Activated CD4-positive, alpha-beta T cell treated with anti-CD3 and anti-CD28 coated beads for 36 hours (primary cell): ENCODE measurements at regions of chr18 and their contacts with region 1.

Region 1: GRCh38 chr18:2655178-2655953 is at the start of gene SMCHD1:
- DNase-seq: peak; percentile 97
- ATAC-seq: peak; percentile 78
- H3K4me3 Mint-ChIP-seq: peak within 1 kb of the TSS; percentile 95
- H3K27ac Mint-ChIP-seq: peak within 1 kb of the TSS; percentile 96
- H3K4me1 Mint-ChIP-seq: peaks cover 31% of the 10 kb centered on the region
- H3K27me3 Mint-ChIP-seq: no peaks in the 10 kb centered on the region
- total RNA-seq, gene SMCHD1: 89.5 to 121 TPM

Region 2: DNA sequence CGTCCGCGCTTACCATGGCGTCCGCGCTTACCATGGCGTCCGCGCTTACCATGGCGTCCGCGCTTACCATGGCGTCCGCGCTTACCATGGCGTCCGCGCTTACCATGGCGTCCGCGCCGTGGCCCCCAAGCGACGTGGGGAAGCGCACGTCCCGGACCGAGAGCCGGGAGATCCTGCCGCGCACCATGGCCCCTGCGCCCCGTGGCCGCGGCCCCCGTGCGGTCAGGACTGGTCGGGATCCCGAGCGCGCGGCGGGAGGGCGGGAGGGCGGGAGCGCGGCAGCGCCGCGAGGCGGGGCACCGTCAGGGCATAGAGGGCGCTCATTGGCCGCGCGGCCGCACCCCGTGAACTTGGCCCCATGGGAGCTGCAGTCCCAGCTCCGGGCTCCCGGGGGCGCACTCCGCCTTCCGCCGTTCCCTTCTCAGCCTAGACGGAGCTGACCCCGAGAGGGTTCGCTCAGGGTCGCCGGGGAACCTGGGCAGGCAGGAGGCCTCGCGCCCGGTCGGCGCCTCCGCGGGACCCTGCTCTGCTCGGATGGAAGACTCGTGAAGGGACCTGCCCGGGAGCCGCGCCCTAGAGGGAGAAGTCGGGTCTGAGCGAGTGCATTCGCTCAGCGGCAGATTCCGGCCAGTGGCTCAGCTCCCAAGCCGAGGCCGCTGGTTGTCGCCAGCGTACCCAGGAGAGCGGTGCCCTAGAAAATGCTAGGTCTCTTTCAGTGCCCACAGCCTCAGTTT is 1942.8 kb before region 1 on chr18 and contains the start of gene ENOSF1:
- CTCF ChIA-PET with region 1: no interaction called
- POLR2A ChIA-PET with region 1: no interaction called
- intact Hi-C with region 1: loop called in 1 of 2 experiments (anchors 2 kb)
- DNase-seq: peak; percentile 95
- ATAC-seq: peak; percentile 91
- H3K4me3 Mint-ChIP-seq: peak within 1 kb of the TSS; percentile 94
- H3K27ac Mint-ChIP-seq: peak within 1 kb of the TSS; percentile 99
- H3K4me1 Mint-ChIP-seq: peaks cover 53% of the 10 kb centered on the region
- H3K27me3 Mint-ChIP-seq: no peaks in the 10 kb centered on the region
- total RNA-seq, gene ENOSF1: 92.6 to 97.4 TPM

Region 3: DNA sequence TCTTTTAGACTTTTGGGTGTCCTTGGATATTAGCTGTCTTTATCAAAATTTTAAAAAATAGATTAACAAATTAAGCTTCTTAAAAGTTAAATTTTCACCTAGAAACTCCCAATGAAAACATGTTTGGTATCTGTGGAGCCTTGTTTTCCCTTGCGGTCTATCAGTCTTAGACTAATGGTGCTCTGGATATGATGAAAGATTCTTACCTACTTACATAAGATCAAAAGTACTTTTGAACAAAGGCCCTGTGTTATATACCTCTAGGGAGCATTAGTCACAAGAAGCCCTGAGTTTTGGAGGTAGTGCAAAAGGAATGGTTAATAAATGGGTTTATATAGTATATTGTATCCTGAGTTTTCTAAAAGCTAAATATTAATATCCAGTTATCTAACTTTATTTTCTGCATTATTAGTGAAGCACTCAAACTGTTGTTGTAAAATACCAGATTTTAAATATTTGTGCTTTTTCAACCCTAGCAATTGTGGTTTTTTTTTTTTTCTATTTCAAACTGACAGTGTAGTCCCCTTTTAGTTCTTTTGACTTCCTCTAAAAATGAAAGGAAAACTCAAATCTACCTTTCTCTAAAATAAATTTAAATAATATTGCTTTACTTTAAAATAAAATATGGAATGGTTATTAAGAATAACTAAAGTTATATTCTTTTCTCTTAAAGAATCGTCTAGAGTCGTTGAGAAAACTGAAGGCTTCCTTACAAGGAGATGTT is 65.9 kb before region 1 on chr18:
- CTCF ChIA-PET with region 1: interaction called, 3 read pairs
- POLR2A ChIA-PET with region 1: interaction called, 4 read pairs
- intact Hi-C with region 1: loop called (anchors 5 kb)
- DNase-seq: no peak
- ATAC-seq: peak; percentile 78
- H3K4me3 Mint-ChIP-seq: peak overlapping the region; percentile 43
- H3K27ac Mint-ChIP-seq: peak overlapping the region; percentile 93
- H3K4me1 Mint-ChIP-seq: peaks cover 44% of the 10 kb centered on the region
- H3K27me3 Mint-ChIP-seq: no peaks in the 10 kb centered on the region

Region 4: GRCh38 chr18:2641638-2642037 is 13.7 kb before region 1 on chr18:
- CTCF ChIA-PET with region 1: interaction called, 5 read pairs
- POLR2A ChIA-PET with region 1: interaction called, 8 read pairs
- intact Hi-C with region 1: loop called (anchors 1 kb)
- DNase-seq: no peak
- ATAC-seq: peak; percentile 71
- H3K4me3 Mint-ChIP-seq: peak overlapping the region; percentile 63
- H3K27ac Mint-ChIP-seq: no peak overlapping the region
- H3K4me1 Mint-ChIP-seq: peaks cover 51% of the 10 kb centered on the region
- H3K27me3 Mint-ChIP-seq: no peaks in the 10 kb centered on the region

Region 5: DNA sequence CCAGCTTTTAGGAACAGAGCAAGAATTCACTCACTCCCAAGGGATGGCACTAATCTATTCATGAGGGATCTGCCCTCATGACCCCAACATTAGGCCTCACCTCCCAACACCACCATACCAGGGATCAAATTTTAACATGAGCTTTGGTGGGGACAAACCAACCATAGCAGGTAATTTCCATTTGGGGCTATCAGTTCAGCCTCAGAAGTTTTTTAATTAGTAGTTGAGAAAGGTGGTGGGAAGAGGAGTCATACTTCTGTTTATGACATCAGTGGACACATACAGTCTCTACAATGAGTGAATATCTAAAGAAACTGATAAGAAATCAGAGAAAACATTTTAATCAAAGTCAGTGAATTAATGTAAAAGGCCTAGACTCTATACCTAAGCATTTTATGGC is 131.9 kb after region 1 on chr18:
- CTCF ChIA-PET with region 1: no interaction called
- POLR2A ChIA-PET with region 1: no interaction called
- intact Hi-C with region 1: no loop called
- DNase-seq: no peak
- ATAC-seq: no peak
- H3K4me3 Mint-ChIP-seq: no peak overlapping the region
- H3K27ac Mint-ChIP-seq: peak overlapping the region; percentile 32
- H3K4me1 Mint-ChIP-seq: peaks cover 5% of the 10 kb centered on the region
- H3K27me3 Mint-ChIP-seq: no peaks in the 10 kb centered on the region

Region 6: DNA sequence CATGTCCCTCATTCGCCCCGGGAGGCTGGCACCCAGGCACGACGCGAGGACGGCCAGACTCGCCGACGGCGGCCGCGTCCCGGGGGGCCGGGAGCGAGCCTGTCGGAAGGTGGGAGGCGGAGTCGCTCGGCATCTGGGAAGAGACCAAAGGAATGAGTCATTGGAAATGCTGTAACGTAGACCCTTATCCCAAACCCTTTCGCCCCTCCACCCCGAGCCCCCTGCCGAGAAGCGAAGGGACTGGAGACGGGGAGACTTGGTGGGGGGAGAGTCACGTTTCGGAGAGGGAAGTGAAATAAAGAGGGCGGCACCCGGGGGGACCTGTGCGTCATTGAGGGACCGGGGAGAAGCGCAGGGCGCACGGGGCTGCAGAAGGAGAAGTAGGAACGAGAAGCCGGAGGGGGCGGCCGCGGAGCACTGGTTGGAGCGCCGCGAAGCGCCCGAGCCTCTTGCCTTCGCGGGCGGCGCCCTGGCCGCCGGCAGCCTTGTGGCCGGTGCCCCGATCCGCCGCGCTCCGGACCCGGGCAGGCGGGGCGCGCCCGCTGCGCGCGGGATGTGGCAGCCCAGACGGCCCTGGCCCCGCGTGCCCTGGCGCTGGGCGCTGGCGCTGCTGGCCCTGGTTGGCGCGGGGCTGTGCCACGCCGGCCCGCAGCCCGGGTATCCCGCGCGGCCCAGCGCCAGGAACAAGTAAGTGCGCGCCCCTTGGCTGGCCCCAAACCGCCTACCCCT is 191.4 kb after region 1 on chr18 and contains the start of gene EMILIN2:
- CTCF ChIA-PET with region 1: no interaction called
- POLR2A ChIA-PET with region 1: no interaction called
- intact Hi-C with region 1: loop called in 1 of 2 experiments (anchors 2 kb)
- DNase-seq: peak; percentile 73
- ATAC-seq: peak; percentile 21
- H3K4me3 Mint-ChIP-seq: peak within 1 kb of the TSS; percentile 76
- H3K27ac Mint-ChIP-seq: peak within 1 kb of the TSS; percentile 64
- H3K4me1 Mint-ChIP-seq: peaks cover 36% of the 10 kb centered on the region
- H3K27me3 Mint-ChIP-seq: peaks cover 34% of the 10 kb centered on the region
- total RNA-seq, gene EMILIN2: 12.0 to 15.7 TPM

Region 7: GRCh38 chr18:3012964-3013804 is 357.8 kb after region 1 on chr18 and contains the start of gene LPIN2:
- CTCF ChIA-PET with region 1: no interaction called
- POLR2A ChIA-PET with region 1: interaction called, 4 read pairs
- intact Hi-C with region 1: loop called in 1 of 2 experiments (anchors 1 kb)
- DNase-seq: peak; percentile 98
- ATAC-seq: peak; percentile 96
- H3K4me3 Mint-ChIP-seq: peak within 1 kb of the TSS; percentile 95
- H3K27ac Mint-ChIP-seq: peak within 1 kb of the TSS; percentile 94
- H3K4me1 Mint-ChIP-seq: peaks cover 66% of the 10 kb centered on the region
- H3K27me3 Mint-ChIP-seq: no peaks in the 10 kb centered on the region
- total RNA-seq, gene LPIN2: 82.6 to 95.3 TPM